ENCODE measurements at regions of chr4 and their contacts with region 1.

Region 1: DNA sequence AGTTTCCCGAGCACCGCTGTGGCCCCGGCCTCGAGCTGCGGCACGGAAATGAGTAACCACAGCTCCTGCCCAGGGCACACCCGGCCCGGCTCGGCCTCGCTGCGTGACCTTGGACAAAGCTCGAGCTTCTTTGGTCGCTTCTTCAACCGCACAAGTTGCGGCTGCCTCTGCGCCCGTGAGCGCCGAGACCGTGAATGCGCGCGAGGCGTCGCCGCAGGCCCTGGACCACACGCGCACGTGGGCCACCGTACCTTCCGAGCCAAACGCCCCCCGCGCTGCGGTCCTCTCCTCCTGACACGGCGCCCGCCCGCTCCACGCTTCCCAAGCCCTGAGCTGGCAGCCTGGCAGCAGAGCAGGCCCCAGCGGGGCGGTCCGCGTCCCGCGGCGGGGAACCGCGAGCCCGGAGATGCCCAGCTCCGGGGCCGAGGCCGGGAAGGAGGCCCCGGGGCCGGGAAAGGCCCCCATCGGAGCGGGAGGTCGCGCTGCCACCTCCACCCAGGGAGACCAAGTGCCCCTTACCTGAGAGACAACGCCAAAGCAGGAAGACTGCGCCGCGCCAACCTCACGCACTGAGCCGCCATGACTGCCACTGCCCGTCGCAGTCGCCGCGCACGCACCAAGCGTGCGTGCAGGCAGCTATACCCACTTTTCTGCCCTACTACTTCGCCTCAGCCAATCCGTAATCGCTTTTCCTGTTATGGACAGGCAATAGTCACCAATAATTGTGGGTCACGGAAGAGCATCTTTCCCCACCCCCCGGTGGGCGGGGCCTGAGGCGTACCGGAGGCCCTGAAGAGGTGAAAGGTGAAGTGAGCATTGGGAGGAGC is at the start of gene GRPEL1:
- DNase-seq: peak in 1 of 2 experiments; percentile 98
- H3K4me3 ChIP-seq: peak within 1 kb of the TSS; percentile 76 to 93 (median 80)
- H3K27ac ChIP-seq: peak within 1 kb of the TSS; percentile 38; the same call in 1 of the 2 replicates
- H3K4me1 ChIP-seq: peaks cover 2 to 6% (median 3%) of the 10 kb centered on the region in 4 experiments; a peak in 2 of 7 replicates
- H3K27me3 ChIP-seq: peaks cover 0 to 17% (median 10%) of the 10 kb centered on the region in 4 experiments; a peak in 6 of 7 replicates
- CTCF ChIP-seq: no peak
- EP300 ChIP-seq: no peak
- POLR2A ChIP-seq: peak in 1 of 2 experiments; percentile 89; a peak in 2 of 3 replicates
- RAD21 ChIP-seq: no peak
- total RNA-seq, gene GRPEL1: 39.9 and 43.0 TPM in 2 replicates

Region 2: GRCh38 chr4:6716018-6716911 is 351.4 kb before region 1 on chr4 and contains the start of gene BLOC1S4:
- CTCF ChIA-PET with region 1: interaction called, 21 read pairs
- POLR2A ChIA-PET with region 1: no interaction called
- DNase-seq: peak; percentile 70 to 86
- H3K4me3 ChIP-seq: peak within 1 kb of the TSS; percentile 84 to 96 (median 88)
- H3K27ac ChIP-seq: peak within 1 kb of the TSS; percentile 68; the same call in 1 of the 2 replicates
- H3K4me1 ChIP-seq: peaks cover 0 to 4% (median 0%) of the 10 kb centered on the region in 4 experiments; a peak in 2 of 7 replicates
- H3K27me3 ChIP-seq: no peaks in the 10 kb centered on the region; a peak in 3 of 7 replicates
- CTCF ChIP-seq: no peak
- EP300 ChIP-seq: no peak
- POLR2A ChIP-seq: peak in 1 of 2 experiments; percentile 78; a peak in 2 of 3 replicates
- RAD21 ChIP-seq: no peak
- total RNA-seq, gene BLOC1S4: 19.1 and 20.5 TPM in 2 replicates

Region 3: DNA sequence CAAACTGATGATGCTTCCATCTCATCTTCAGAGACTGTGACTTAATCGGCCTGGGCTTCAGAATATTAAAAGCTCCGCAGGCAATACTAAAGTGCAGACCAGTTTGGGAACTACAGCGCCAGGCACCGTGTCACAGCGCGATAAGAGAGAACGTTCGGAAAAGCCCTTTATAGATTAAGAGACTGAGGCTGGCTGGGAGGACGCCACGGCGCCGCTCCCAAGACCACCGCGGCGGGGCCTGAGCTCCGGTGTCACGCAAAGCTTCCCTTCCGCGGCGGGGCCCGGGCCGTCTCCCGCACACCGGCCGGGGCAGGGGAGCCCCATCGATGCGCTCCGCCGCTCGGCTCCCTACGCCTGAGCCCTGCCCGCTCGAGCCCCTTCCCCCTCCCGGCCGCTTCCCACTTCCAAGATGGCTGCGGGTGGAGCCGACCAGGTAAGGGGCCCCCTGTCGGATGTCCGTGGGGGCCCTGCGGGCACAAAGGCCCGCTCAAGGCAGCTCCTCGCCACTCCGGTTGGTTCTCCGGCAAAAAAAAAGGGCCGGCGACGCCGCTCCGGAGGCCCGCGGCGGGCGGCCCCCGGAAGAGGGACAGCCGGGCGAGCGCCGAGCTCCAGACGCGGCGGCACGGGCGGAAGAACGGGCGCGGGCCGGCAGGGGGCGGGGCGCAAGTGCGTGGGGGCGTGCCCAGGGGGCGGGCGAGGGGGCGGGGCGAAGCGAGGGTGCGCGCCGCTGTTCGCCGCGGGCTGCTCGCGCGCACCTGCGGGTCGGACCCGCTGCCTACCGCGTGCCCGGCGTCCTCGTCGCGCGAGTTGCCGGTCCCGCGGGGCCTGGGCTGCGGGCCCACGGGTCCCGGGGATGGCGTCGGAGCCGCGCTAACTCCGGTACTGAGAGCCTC is 158.3 kb before region 1 on chr4 and contains the start of gene TBC1D14:
- CTCF ChIA-PET with region 1: interaction called, 17 read pairs
- POLR2A ChIA-PET with region 1: interaction called, 7 read pairs
- DNase-seq: peak in 1 of 2 experiments; percentile 91
- H3K4me3 ChIP-seq: peak within 1 kb of the TSS; percentile 58 to 92 (median 75)
- H3K27ac ChIP-seq: peak within 1 kb of the TSS; percentile 94; the same call in 1 of the 2 replicates
- H3K4me1 ChIP-seq: peaks cover 3 to 25% (median 11%) of the 10 kb centered on the region in 4 experiments
- H3K27me3 ChIP-seq: peaks cover 0 to 14% (median 5%) of the 10 kb centered on the region in 4 experiments; a peak in 4 of 7 replicates
- CTCF ChIP-seq: no peak; a peak in 1 of 4 replicates
- EP300 ChIP-seq: no peak
- POLR2A ChIP-seq: peak in 1 of 2 experiments; percentile 70; a peak in 2 of 3 replicates
- RAD21 ChIP-seq: peak; percentile 1 to 14; a peak in 1 of 4 replicates
- total RNA-seq, gene TBC1D14: 48.2 and 49.7 TPM in 2 replicates

Region 4: DNA sequence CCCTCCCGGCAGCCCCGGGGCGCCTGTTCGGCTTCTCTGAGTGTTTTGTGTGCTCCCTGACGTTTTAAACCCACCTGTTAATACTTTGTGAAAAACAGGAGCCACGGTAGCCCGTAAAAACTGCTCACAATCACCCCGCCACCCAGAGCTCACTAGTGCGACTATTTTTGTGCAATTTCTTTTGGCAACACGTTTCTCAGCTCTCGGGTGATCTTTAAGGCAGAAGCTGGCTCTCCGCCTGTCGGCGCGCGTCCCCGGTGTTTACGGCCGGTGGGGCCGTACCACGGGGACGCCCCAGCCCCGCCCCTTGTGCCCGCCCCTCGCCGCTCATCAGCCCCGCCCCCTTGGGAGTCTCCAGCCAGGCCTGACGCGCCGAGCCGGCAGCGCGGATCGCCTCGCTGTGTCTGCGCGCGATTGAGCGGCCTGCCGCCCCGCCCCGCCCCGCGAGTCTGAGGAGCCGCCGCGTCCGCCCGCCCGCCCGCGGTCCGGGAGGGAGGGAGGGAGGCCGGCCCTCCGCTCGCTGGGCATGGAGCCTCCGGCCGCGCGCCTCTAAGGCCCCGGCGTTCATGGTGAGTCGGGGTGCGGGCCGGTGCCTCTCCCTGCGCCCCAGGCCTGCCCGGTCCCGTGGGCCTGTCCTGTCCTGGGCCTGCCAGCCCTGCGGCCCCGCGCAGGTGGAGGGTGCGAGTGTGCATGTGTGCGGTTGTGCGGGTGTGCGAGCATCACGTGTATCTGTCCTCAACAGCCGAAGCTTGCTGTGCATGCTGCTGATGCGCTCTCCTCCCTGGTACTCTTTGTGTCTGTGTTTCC is 80.7 kb before region 1 on chr4:
- CTCF ChIA-PET with region 1: interaction called, 3 read pairs
- POLR2A ChIA-PET with region 1: interaction called, 13 read pairs
- DNase-seq: peak; percentile 78 to 93
- H3K4me3 ChIP-seq: peak overlapping the region; percentile 66 to 93 (median 80)
- H3K27ac ChIP-seq: peak overlapping the region; percentile 75
- H3K4me1 ChIP-seq: peaks cover 5 to 17% (median 8%) of the 10 kb centered on the region in 4 experiments
- H3K27me3 ChIP-seq: no peaks in the 10 kb centered on the region
- CTCF ChIP-seq: no peak
- EP300 ChIP-seq: peak in 1 of 2 experiments; percentile 4; a peak in 1 of 3 replicates
- POLR2A ChIP-seq: peak; percentile 32 to 63; a peak in 2 of 3 replicates
- RAD21 ChIP-seq: peak in 1 of 2 experiments; percentile 8; a peak in 1 of 4 replicates

Region 5: GRCh38 chr4:7055111-7055989 is 12.3 kb before region 1 on chr4:
- CTCF ChIA-PET with region 1: interaction called, 15 read pairs
- POLR2A ChIA-PET with region 1: interaction called, 17 read pairs
- DNase-seq: no peak
- H3K4me3 ChIP-seq: no peak overlapping the region
- H3K27ac ChIP-seq: no peak overlapping the region
- H3K4me1 ChIP-seq: no peaks in the 10 kb centered on the region; a peak in 1 of 7 replicates
- H3K27me3 ChIP-seq: no peaks in the 10 kb centered on the region
- CTCF ChIP-seq: no peak
- EP300 ChIP-seq: no peak
- POLR2A ChIP-seq: no peak
- RAD21 ChIP-seq: no peak

Region 6: GRCh38 chr4:7101692-7102515 is 34.2 kb after region 1 on chr4:
- CTCF ChIA-PET with region 1: interaction called, 25 read pairs
- POLR2A ChIA-PET with region 1: no interaction called
- DNase-seq: peak; percentile 63 to 83
- H3K4me3 ChIP-seq: peak overlapping the region in 3 of 4 experiments; percentile 13 to 54 (median 29); a peak in 4 of 8 replicates
- H3K27ac ChIP-seq: no peak overlapping the region
- H3K4me1 ChIP-seq: peaks cover 0 to 12% (median 9%) of the 10 kb centered on the region in 4 experiments; a peak in 6 of 7 replicates
- H3K27me3 ChIP-seq: peaks cover 3 to 34% (median 28%) of the 10 kb centered on the region in 4 experiments
- CTCF ChIP-seq: peak in 2 of 3 experiments; percentile 57 to 85; a peak in 2 of 4 replicates
- EP300 ChIP-seq: no peak
- POLR2A ChIP-seq: no peak
- RAD21 ChIP-seq: peak; percentile 44 to 52

Measured in H1 (cell line).